ENCODE measurements at regions of chr12 and their contacts with region 1.

Region 1: GRCh38 chr12:53321074-53321814 is at the start of gene AAAS:
- DNase-seq: peak; percentile 97 to 100
- ATAC-seq: peak; percentile 90
- H3K4me3 ChIP-seq: peak within 1 kb of the TSS; percentile 60
- H3K27ac ChIP-seq: peak within 1 kb of the TSS; percentile 96 to 98
- H3K4me1 ChIP-seq: peaks cover 24% of the 10 kb centered on the region
- CTCF ChIP-seq: peak; percentile 95
- EP300 ChIP-seq: no peak
- POLR2A ChIP-seq: peak; percentile 72
- RAD21 ChIP-seq: peak in 1 of 2 experiments; percentile 29; a peak in 2 of 5 replicates
- polyA plus RNA-seq, gene AAAS: 82.6 and 104 TPM in 2 replicates

Region 2: GRCh38 chr12:53213348-53213747 is 107.9 kb before region 1 on chr12:
- CTCF ChIA-PET with region 1: interaction called, 103 read pairs
- POLR2A ChIA-PET with region 1: interaction called, 4 read pairs
- DNase-seq: peak; percentile 81 to 91
- ATAC-seq: peak; percentile 79 to 92
- H3K4me3 ChIP-seq: no peak overlapping the region
- H3K27ac ChIP-seq: no peak overlapping the region
- H3K4me1 ChIP-seq: peaks cover 21% of the 10 kb centered on the region
- CTCF ChIP-seq: peak; percentile 97
- EP300 ChIP-seq: no peak
- POLR2A ChIP-seq: no peak
- RAD21 ChIP-seq: peak; percentile 98 to 99

Region 3: DNA sequence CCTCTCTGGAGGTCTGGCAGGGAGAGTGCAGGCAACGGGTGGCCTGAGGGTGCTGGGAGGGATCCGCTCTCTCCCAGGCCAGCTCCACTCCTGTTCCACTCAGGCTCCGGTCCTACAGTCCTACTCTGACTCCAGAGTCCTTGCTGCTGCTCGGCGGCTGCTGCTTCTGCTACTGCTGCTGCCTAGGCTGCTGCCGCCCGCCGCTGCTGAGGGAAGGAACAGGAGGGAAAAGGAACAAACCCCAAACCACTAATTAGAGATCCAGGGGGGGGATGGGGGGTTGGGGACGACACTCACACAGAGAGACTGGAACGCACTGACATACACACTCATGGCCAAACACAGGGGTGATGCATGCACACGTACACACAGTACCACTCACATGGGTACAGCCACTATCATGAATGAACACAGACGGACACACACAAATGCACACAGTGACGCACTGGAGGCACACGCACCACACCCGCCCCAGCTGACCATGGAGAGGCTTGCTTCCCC is 15.0 kb after region 1 on chr12 and contains the start of gene SP7:
- CTCF ChIA-PET with region 1: interaction called, 638 read pairs
- POLR2A ChIA-PET with region 1: interaction called, 4 read pairs
- DNase-seq: no peak
- ATAC-seq: peak; percentile 25 to 49; a peak in 5 of 6 replicates
- H3K4me3 ChIP-seq: no peak within 1 kb of the TSS
- H3K27ac ChIP-seq: peak within 1 kb of the TSS in 1 of 2 experiments; percentile 34; a peak in 1 of 6 replicates
- H3K4me1 ChIP-seq: no peaks in the 10 kb centered on the region
- CTCF ChIP-seq: no peak
- EP300 ChIP-seq: no peak
- POLR2A ChIP-seq: no peak
- RAD21 ChIP-seq: no peak
- polyA plus RNA-seq, gene SP7: 0.05 TPM in 1 of 2 replicates, not detected in the other

Region 4: GRCh38 chr12:53379389-53380103 is 58.3 kb after region 1 on chr12:
- CTCF ChIA-PET with region 1: interaction called, 13 read pairs
- POLR2A ChIA-PET with region 1: interaction called, 21 read pairs
- DNase-seq: peak; percentile 97 to 100
- ATAC-seq: peak; percentile 87 to 92
- H3K4me3 ChIP-seq: peak overlapping the region; percentile 70
- H3K27ac ChIP-seq: peak overlapping the region; percentile 95 to 99
- H3K4me1 ChIP-seq: peaks cover 32% of the 10 kb centered on the region
- CTCF ChIP-seq: no peak
- EP300 ChIP-seq: no peak
- POLR2A ChIP-seq: peak; percentile 82
- RAD21 ChIP-seq: no peak

Region 5: GRCh38 chr12:53476769-53477209 is 155.5 kb after region 1 on chr12:
- CTCF ChIA-PET with region 1: interaction called, 13 read pairs
- POLR2A ChIA-PET with region 1: interaction called, 6 read pairs
- DNase-seq: no peak
- ATAC-seq: peak; percentile 47 to 64
- H3K4me3 ChIP-seq: no peak overlapping the region
- H3K27ac ChIP-seq: no peak overlapping the region
- H3K4me1 ChIP-seq: peaks cover 66% of the 10 kb centered on the region
- CTCF ChIP-seq: peak; percentile 57
- EP300 ChIP-seq: no peak
- POLR2A ChIP-seq: no peak
- RAD21 ChIP-seq: peak; percentile 24 to 44; a peak in 4 of 5 replicates